AG04449 (cell line): ENCODE measurements at regions of chr6 and their contacts with region 1.

Region 1: GRCh38 chr6:110039364-110039980 is 61.4 kb downstream of the GPR6 start:
- DNase-seq: peak; percentile 61
- H3K4me3 ChIP-seq: peak overlapping the region; percentile 45
- CTCF ChIP-seq: peak; percentile 89

Region 2: DNA sequence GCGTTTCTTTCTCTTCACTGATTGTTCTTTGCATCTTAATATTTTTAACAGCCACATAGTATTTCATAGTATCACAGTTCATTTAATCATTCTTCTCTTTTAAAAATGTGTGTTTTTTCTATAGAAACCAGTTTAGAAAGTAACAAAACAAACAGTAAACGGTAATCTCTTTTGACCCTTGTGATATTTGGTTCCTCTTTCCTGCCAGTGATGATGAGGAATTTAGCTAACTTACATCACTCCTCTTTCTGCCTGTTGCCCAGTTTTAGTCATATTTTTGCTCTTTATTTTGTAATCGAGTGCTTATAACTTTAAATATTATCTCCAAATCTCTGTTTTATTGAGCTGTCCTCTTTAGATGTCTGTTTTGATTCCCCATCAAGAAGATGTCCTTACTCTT is 518.4 kb before region 1 on chr6:
- CTCF ChIA-PET with region 1: interaction called, 46 read pairs
- POLR2A ChIA-PET with region 1: no interaction called
- DNase-seq: no peak
- H3K4me3 ChIP-seq: no peak overlapping the region
- CTCF ChIP-seq: no peak

Region 3: DNA sequence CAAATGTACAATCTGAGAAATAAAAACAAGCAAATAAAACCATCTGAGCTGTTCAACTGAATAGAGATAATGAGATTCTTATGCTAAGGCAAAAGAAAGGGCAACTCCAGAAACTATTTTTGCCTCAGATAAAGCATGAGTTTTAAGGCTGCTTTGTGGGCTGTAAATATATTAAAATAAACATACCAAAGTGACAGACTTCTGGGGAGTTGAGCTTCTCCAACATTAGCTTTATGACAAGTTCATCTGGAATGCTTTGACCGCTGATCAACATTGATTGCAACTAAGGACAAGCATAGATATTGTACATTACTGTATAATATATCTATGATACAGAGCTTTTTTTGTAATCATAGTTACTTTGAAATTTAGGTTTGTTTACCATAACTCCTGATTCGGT is 367.7 kb before region 1 on chr6:
- CTCF ChIA-PET with region 1: interaction called, 10 read pairs
- POLR2A ChIA-PET with region 1: no interaction called
- DNase-seq: no peak
- H3K4me3 ChIP-seq: no peak overlapping the region
- CTCF ChIP-seq: no peak

Region 4: GRCh38 chr6:109736273-109737025 is 303.0 kb before region 1 on chr6:
- CTCF ChIA-PET with region 1: interaction called, 11 read pairs
- POLR2A ChIA-PET with region 1: no interaction called
- DNase-seq: no peak
- H3K4me3 ChIP-seq: no peak overlapping the region
- CTCF ChIP-seq: no peak

Region 5: GRCh38 chr6:109820706-109821350 is 218.6 kb before region 1 on chr6:
- CTCF ChIA-PET with region 1: no interaction called
- POLR2A ChIA-PET with region 1: no interaction called
- DNase-seq: no peak
- H3K4me3 ChIP-seq: no peak overlapping the region
- CTCF ChIP-seq: no peak

Region 6: DNA sequence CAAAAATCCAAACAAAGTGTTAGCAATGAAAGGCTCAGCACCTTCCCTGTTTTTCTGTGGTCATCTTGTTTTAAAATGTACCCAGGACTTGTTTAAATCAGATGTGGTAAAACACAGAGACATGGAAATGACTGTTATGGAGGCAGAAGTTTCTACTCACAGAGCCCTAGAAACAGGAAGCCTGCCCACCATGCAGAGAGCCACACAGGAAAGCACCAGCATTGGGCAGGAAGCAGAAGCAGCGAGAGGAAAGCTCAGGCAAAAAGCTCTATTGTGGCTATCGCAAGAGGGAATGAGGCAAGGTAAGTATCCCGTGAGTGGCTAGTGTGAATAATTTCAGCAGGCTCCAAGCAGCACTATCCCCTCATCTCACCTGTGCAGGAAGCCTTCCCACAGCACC is 18.6 kb before region 1 on chr6:
- CTCF ChIA-PET with region 1: interaction called, 78 read pairs
- POLR2A ChIA-PET with region 1: no interaction called
- DNase-seq: no peak
- H3K4me3 ChIP-seq: no peak overlapping the region
- CTCF ChIP-seq: no peak

Region 7: GRCh38 chr6:110389689-110390382 is 350.4 kb after region 1 on chr6:
- CTCF ChIA-PET with region 1: interaction called, 80 read pairs
- POLR2A ChIA-PET with region 1: no interaction called
- DNase-seq: no peak
- H3K4me3 ChIP-seq: no peak overlapping the region
- CTCF ChIP-seq: no peak